H1 (cell line): ENCODE measurements at regions of chr10 and their contacts with region 1.

Region 1: GRCh38 chr10:101258179-101258885 is 29.1 kb upstream of the LBX1 start:
- DNase-seq: no peak
- H3K4me3 ChIP-seq: no peak overlapping the region
- H3K27ac ChIP-seq: no peak overlapping the region
- H3K4me1 ChIP-seq: peaks cover 2 to 19% (median 10%) of the 10 kb centered on the region in 4 experiments
- H3K27me3 ChIP-seq: peaks cover 0 to 4% (median under 1%) of the 10 kb centered on the region in 4 experiments; a peak in 4 of 7 replicates
- CTCF ChIP-seq: no peak
- EP300 ChIP-seq: no peak
- POLR2A ChIP-seq: no peak
- RAD21 ChIP-seq: no peak

Region 2: DNA sequence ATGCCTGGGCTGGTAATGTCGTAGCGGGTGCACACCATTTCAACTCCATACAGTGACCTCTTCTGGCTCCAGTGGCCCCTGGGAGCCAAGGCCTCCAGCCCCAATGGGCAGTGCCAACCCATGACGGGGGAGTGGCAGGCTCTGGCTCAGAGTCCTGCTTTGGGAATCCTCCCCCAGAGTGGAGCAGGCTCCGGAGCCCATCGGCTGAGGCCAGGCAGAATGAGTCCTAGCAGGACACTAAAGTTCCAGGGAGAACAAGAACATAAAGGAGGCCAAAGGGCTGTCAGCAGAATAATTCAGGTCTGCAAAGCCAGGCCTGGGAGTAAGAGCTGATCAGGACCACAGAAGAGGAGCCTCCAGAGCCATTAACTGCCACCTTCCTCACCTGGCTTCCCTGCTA is 62.4 kb before region 1 on chr10:
- CTCF ChIA-PET with region 1: no interaction called
- POLR2A ChIA-PET with region 1: no interaction called
- DNase-seq: no peak
- H3K4me3 ChIP-seq: no peak overlapping the region
- H3K27ac ChIP-seq: no peak overlapping the region
- H3K4me1 ChIP-seq: peaks cover 0 to 4% (median under 1%) of the 10 kb centered on the region in 4 experiments; a peak in 1 of 7 replicates
- H3K27me3 ChIP-seq: no peaks in the 10 kb centered on the region; a peak in 3 of 7 replicates
- CTCF ChIP-seq: no peak
- EP300 ChIP-seq: no peak
- POLR2A ChIP-seq: no peak
- RAD21 ChIP-seq: no peak

Region 3: GRCh38 chr10:101207026-101207425 is 51.3 kb before region 1 on chr10:
- CTCF ChIA-PET with region 1: no interaction called
- POLR2A ChIA-PET with region 1: no interaction called
- DNase-seq: no peak
- H3K4me3 ChIP-seq: no peak overlapping the region
- H3K27ac ChIP-seq: no peak overlapping the region
- H3K4me1 ChIP-seq: no peaks in the 10 kb centered on the region
- H3K27me3 ChIP-seq: peaks cover 0 to 9% (median 5%) of the 10 kb centered on the region in 4 experiments; a peak in 5 of 7 replicates
- CTCF ChIP-seq: no peak
- EP300 ChIP-seq: no peak
- POLR2A ChIP-seq: no peak
- RAD21 ChIP-seq: no peak

Region 4: DNA sequence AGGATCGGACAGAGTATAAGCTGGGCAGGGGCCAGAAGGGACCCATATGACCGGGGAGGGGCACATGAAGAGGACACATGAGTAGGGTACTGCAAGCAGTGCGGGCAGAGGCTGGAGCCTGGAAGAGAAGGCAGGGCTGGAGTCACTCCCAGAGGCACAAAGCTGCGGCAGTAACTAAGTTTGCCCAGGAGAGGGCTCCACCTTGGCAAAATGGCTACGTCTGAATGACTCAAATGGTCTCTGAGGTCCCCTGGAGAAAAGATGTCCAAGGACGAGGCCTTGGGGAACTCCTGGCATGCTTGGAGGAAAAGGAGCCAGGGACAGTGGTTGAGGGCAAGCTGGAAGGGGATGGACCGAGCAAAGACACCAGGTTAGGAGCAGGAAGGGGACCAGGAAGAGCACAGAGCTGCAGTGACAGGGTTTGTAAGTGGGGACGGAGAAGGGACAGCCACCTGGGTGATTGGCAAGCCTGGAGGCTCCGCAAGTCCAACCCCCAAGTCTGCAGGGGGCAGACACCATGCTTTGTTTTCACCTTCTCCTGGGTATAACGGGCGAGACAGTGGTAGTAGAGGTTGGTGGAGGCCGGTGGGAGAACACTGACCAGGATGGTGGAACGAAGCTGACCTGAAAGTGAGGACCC is 14.0 kb after region 1 on chr10:
- CTCF ChIA-PET with region 1: interaction called, 116 read pairs
- POLR2A ChIA-PET with region 1: interaction called, 4 read pairs
- DNase-seq: peak; percentile 65 to 90
- H3K4me3 ChIP-seq: peak overlapping the region in 1 of 4 experiments; percentile 14; a peak in 1 of 8 replicates
- H3K27ac ChIP-seq: no peak overlapping the region
- H3K4me1 ChIP-seq: peaks cover 4 to 8% (median 6%) of the 10 kb centered on the region in 4 experiments; a peak in 5 of 7 replicates
- H3K27me3 ChIP-seq: no peaks in the 10 kb centered on the region; a peak in 3 of 7 replicates
- CTCF ChIP-seq: peak; percentile 80 to 93 (median 82)
- EP300 ChIP-seq: no peak
- POLR2A ChIP-seq: no peak
- RAD21 ChIP-seq: peak; percentile 57 to 65

Region 5: DNA sequence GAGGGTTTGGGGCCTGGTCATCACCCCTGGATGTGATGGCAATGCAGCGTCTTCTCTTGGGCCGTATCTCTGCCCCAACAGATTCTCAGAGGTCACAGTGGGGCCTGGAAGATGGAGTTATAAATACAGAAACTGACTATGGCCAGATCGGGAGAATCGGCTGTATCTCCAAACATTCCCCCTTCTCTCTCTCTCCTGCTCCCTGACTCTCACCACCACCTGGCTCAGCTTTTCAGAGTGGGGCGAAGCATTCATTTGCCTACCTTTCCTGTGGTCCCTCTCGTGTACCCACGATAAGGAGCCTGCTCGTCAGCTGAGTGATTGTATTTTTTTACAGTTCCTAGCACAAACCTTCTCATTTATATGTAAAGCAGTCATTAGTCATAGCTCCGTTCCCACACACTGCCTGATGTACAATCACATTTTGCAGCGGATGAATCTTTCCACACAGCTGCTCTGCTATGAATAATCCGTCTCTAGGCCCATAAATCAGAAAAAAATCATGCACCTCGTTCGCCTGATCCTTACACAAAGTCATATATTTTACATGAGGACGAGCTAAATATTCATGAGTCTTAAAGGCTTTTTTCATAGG is 72.4 kb after region 1 on chr10:
- CTCF ChIA-PET with region 1: no interaction called
- POLR2A ChIA-PET with region 1: no interaction called
- DNase-seq: no peak
- H3K4me3 ChIP-seq: no peak overlapping the region
- H3K27ac ChIP-seq: no peak overlapping the region
- H3K4me1 ChIP-seq: peaks cover 0 to 3% (median 0%) of the 10 kb centered on the region in 4 experiments; a peak in 2 of 7 replicates
- H3K27me3 ChIP-seq: no peaks in the 10 kb centered on the region
- CTCF ChIP-seq: no peak
- EP300 ChIP-seq: no peak
- POLR2A ChIP-seq: no peak
- RAD21 ChIP-seq: no peak